Kidney (tissue), 22 donors: ENCODE measurements at regions of chr19 and their contacts with region 1.

Region 1: DNA sequence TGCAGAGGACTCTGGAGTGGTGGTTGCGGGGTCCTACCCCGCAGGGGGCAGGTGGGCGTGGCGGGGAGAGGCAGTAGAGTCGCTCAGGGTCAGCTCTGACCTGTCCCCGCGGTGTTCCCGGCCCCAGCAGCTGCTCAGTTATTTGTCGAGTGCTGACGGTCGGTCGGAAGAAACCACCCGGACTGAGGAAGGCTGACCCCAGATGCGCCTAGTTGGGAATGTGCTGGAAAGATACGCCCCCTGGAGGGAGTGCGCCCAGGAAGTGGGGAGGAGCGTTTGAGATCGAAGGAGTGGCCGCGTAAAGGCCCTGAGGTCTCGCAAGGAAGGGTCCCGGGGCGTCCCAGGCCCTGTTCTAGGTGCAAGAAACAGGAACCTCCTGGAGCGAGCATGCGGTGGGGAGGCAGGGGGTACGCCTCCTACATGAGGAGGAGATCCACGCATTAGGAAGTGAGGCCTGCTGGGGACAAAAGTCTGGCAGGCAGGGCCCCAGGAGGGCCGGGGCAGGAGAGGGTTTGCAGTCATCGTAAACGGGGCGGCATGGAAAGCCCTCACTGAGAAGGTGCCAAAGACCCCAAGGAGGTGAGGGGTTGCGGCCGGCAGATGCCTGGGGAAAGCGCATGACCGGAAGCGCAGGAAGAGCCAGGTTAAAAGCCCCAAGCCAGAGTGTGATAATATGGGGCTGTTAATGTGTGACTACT is 9.2 kb downstream of the CCDC8 start:
- DNase-seq: peak; percentile 75 to 89 (median 85)
- H3K4me3 ChIP-seq: peak overlapping the region; percentile 12 to 73 (median 68)
- H3K27ac ChIP-seq: peak overlapping the region; percentile 89 to 90
- H3K4me1 ChIP-seq: peaks cover 0 to 15% (median 0%) of the 10 kb centered on the region in 3 donors
- H3K27me3 ChIP-seq: no peaks in the 10 kb centered on the region
- CTCF ChIP-seq: peak; percentile 7

Region 2: GRCh38 chr19:46471116-46471733 is 67.0 kb after region 1 on chr19 and contains the start of gene PNMA8A:
- intact Hi-C with region 1: no loop called
- DNase-seq: peak; percentile 95 to 97 (median 97)
- H3K4me3 ChIP-seq: peak within 1 kb of the TSS; percentile 38 to 55 (median 50)
- H3K27ac ChIP-seq: peak within 1 kb of the TSS in 1 of 2 donors; percentile 54
- H3K4me1 ChIP-seq: peaks cover 0 to 6% (median 5%) of the 10 kb centered on the region in 3 donors
- H3K27me3 ChIP-seq: no peaks in the 10 kb centered on the region
- CTCF ChIP-seq: no peak
- total RNA-seq, gene PNMA8A: 16.2 TPM

Region 3: GRCh38 chr19:46487802-46488445 is 83.7 kb after region 1 on chr19:
- intact Hi-C with region 1: loop called (anchors 5 kb)
- DNase-seq: peak; percentile 90 to 93 (median 90)
- H3K4me3 ChIP-seq: peak overlapping the region in 2 of 3 donors; percentile 48 to 60
- H3K27ac ChIP-seq: no peak overlapping the region
- H3K4me1 ChIP-seq: peaks cover 0 to 9% (median 9%) of the 10 kb centered on the region in 3 donors
- H3K27me3 ChIP-seq: no peaks in the 10 kb centered on the region
- CTCF ChIP-seq: peak; percentile 93